ENCODE measurements at regions of chr14 and their contacts with region 1.

Region 1: DNA sequence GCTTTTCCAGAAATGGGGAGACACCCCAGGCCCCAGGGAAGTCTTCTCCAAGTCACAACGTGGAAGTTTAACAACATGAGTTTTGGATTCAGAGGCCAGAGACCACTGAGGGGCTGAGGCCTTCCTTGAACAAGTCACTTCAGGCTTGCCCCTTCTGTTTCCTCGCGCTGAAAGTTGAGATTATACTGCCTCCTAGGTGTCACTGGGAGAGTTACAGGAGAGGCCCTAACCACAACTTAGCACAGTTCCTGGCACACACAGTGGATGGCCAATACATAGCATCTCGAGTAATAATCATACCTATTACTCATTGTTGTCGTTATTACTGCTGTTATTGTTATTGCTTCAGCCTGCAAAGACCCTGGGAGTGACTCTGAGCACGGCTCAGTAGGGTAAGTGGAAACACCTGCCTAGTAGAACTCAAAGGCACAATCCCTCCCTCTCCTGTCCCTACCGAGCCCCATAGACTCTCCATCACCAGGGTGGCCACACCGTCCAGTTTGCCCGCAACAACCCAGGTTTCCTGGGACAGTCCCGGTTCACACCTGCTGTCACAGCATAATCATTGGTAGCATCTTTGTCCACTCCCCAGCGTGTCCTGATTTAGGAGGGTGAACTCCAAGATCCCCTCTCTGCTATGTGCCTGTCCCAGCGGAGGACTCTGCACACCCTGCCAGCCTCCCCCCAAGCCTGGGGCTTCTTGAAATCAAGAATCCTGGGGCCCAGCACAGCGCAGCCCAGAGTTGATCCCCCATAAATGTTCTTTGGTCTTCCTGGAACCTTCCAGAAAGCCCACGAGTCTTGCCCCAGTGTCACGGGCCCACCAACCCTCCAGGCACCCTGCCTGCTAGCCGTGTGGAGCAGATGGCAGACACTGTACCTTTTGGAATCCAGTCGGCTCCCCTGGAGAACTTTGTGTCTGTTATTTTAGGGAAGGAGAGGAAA is 85.0 kb downstream of the SYNE3 start:
- DNase-seq: no peak
- ATAC-seq: peak; percentile 38 to 52
- H3K4me3 ChIP-seq: no peak overlapping the region
- H3K27ac ChIP-seq: no peak overlapping the region
- H3K4me1 ChIP-seq: no peaks in the 10 kb centered on the region
- H3K27me3 ChIP-seq: no peaks in the 10 kb centered on the region

Region 2: GRCh38 chr14:94689218-94689984 is 742.1 kb before region 1 on chr14:
- intact Hi-C with region 1: loop called in 1 of 4 experiments (anchors 5 kb)
- DNase-seq: peak; percentile 61 to 88 (median 86)
- ATAC-seq: peak; percentile 94
- H3K4me3 ChIP-seq: no peak overlapping the region
- H3K27ac ChIP-seq: no peak overlapping the region
- H3K4me1 ChIP-seq: no peaks in the 10 kb centered on the region
- H3K27me3 ChIP-seq: no peaks in the 10 kb centered on the region

Region 3: DNA sequence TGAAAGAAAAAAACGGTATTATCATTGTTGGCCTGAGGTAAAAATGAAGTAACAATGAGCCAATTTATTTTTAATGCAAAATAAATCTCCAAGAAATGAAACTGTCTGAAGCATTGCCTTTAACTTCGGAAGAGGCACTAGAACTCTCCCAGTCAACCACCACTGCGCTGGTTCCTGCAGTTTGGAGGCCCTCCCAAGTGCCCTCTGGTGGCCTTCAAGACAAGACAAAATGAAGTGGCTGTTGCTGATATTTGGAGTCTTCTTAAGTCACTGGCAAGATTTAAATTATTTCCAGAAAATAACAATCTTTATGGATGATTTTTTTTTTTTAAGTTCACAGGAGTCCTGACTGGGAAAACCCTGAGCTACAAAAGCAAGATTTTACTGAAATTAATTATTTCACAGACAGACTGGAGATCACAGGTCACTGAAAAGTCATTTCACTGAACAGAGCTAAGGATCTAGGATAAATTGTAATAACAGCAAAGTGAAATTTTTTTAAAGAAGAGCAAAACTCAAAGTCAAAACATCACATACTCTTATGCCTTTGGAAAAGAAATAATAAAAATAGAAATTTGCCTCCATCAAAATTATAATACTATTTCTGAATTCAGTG is 332.4 kb before region 1 on chr14:
- intact Hi-C with region 1: loop called in 2 of 4 experiments (anchors 10 kb)
- DNase-seq: peak; percentile 73 to 85 (median 77)
- ATAC-seq: peak; percentile 79 to 84
- H3K4me3 ChIP-seq: no peak overlapping the region
- H3K27ac ChIP-seq: no peak overlapping the region
- H3K4me1 ChIP-seq: peaks cover 10% of the 10 kb centered on the region
- H3K27me3 ChIP-seq: no peaks in the 10 kb centered on the region

Region 4: GRCh38 chr14:95106971-95107370 is 324.5 kb before region 1 on chr14:
- intact Hi-C with region 1: loop called in 1 of 4 experiments (anchors 10 kb)
- DNase-seq: no peak
- ATAC-seq: no peak
- H3K4me3 ChIP-seq: no peak overlapping the region
- H3K27ac ChIP-seq: no peak overlapping the region
- H3K4me1 ChIP-seq: no peaks in the 10 kb centered on the region
- H3K27me3 ChIP-seq: no peaks in the 10 kb centered on the region

Region 5: DNA sequence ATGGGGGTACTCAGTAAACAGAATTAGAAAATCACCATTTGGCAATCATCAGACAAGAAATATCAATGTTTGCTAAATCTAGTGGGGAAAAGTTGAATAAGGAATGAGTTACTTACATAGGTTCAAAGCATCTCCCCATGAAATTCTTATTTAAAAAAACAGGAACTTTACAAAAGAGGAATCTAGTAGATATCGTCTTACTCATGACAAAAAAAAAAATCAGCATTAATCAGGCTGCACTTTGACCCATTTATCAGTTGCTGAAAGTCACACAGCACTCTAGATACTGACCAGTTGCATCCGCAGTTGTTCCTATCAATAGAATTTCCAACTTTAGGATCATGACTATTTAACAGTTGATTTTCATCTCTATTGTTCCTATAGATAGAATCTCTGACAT is 268.3 kb before region 1 on chr14:
- intact Hi-C with region 1: loop called in 1 of 4 experiments (anchors 10 kb)
- DNase-seq: no peak
- ATAC-seq: no peak
- H3K4me3 ChIP-seq: no peak overlapping the region
- H3K27ac ChIP-seq: no peak overlapping the region
- H3K4me1 ChIP-seq: no peaks in the 10 kb centered on the region
- H3K27me3 ChIP-seq: no peaks in the 10 kb centered on the region